ENCODE measurements at regions of chr1 and their contacts with region 1.

Region 1: GRCh38 chr1:77430966-77431690 is 149.3 kb downstream of the AK5 start:
- DNase-seq: peak in 1 of 2 donors; percentile 65
- ATAC-seq: peak; percentile 86 to 92 (median 90)
- H3K4me3 ChIP-seq: no peak overlapping the region
- H3K4me3 Mint-ChIP-seq: no peak overlapping the region
- H3K27ac ChIP-seq: peak overlapping the region; percentile 92
- H3K27ac Mint-ChIP-seq: no peak overlapping the region
- H3K4me1 ChIP-seq: peaks cover 21% of the 10 kb centered on the region
- H3K4me1 Mint-ChIP-seq: peaks cover 18 to 20% of the 10 kb centered on the region in 2 donors
- H3K27me3 ChIP-seq: no peaks in the 10 kb centered on the region
- H3K27me3 Mint-ChIP-seq: no peaks in the 10 kb centered on the region
- CTCF ChIP-seq: no peak

Region 2: DNA sequence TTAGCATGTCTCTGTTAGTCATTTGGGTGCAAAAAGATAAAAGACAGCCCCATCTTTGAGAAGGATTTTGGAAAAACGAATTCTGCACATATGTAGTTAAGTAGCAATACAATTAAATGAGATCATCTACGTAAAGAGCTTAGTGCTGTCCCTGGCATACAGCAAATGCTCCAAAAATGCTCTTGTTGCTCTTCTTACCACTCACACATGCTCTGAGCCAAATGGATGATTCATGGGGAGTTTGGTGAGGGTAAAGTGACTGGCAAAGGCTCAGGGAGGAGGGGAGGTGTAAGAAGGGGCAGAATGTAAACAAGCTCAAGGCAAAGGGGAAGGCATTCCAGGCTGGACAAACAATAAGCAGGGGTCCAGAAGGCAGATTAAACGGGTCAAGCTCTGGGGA is 42.6 kb after region 1 on chr1:
- intact Hi-C with region 1: loop called (anchors 5 kb)
- DNase-seq: no peak
- ATAC-seq: no peak
- H3K4me3 ChIP-seq: no peak overlapping the region
- H3K4me3 Mint-ChIP-seq: no peak overlapping the region
- H3K27ac ChIP-seq: no peak overlapping the region
- H3K27ac Mint-ChIP-seq: no peak overlapping the region
- H3K4me1 ChIP-seq: no peaks in the 10 kb centered on the region
- H3K4me1 Mint-ChIP-seq: peaks cover 24 to 26% of the 10 kb centered on the region in 2 donors
- H3K27me3 ChIP-seq: no peaks in the 10 kb centered on the region
- H3K27me3 Mint-ChIP-seq: peaks cover 0 to 2% of the 10 kb centered on the region in 2 donors
- CTCF ChIP-seq: no peak

Measured in natural killer cell (primary cell).